Activated naive CD8-positive, alpha-beta T cell treated with anti-CD3 and anti-CD28 coated beads, Interleukin-2, amount 10 ng/mL, durations not matched to agents 7 days and 5 days (primary cell): ENCODE measurements at regions of chr17 and their contacts with region 1.

Region 1: GRCh38 chr17:40121181-40122135 is at the start of gene MSL1:
- DNase-seq: peak; percentile 91
- ATAC-seq: peak; percentile 60
- H3K4me3 Mint-ChIP-seq: peak within 1 kb of the TSS; percentile 81
- H3K27ac Mint-ChIP-seq: peak within 1 kb of the TSS; percentile 75
- H3K4me1 Mint-ChIP-seq: peaks cover 33% of the 10 kb centered on the region
- H3K27me3 Mint-ChIP-seq: no peaks in the 10 kb centered on the region
- total RNA-seq, gene MSL1: 107 to 110 TPM

Region 2: DNA sequence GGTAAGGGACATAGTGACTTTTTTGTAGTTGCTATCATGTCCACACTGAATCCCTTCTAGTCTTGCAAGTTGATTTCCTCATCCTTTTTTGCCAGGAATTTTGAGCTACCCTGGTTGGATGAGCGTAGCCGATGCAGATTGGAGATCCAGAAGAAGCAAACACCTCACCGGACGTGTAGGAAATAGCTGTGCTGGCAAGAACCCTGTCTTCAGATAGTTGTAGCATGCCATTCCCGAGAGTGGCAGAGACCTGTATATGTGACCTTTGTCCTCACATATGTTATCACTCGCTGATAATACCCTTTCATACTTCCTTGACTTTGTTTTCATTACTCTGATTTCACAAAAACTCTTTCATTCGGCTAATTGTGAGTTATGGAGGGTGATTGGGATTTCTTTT is 12.7 kb after region 1 on chr17:
- POLR2A ChIA-PET with region 1: interaction called, 48 read pairs
- DNase-seq: no peak
- ATAC-seq: no peak
- H3K4me3 Mint-ChIP-seq: no peak overlapping the region
- H3K27ac Mint-ChIP-seq: no peak overlapping the region
- H3K4me1 Mint-ChIP-seq: peaks cover 13% of the 10 kb centered on the region
- H3K27me3 Mint-ChIP-seq: no peaks in the 10 kb centered on the region

Region 3: GRCh38 chr17:40139566-40140058 is 18.2 kb after region 1 on chr17:
- POLR2A ChIA-PET with region 1: interaction called, 48 read pairs
- DNase-seq: peak; percentile 38
- ATAC-seq: peak; percentile 1
- H3K4me3 Mint-ChIP-seq: peak overlapping the region; percentile 99
- H3K27ac Mint-ChIP-seq: peak overlapping the region; percentile 97
- H3K4me1 Mint-ChIP-seq: peaks cover 28% of the 10 kb centered on the region
- H3K27me3 Mint-ChIP-seq: no peaks in the 10 kb centered on the region

Region 4: GRCh38 chr17:40159456-40159855 is 38.0 kb after region 1 on chr17:
- POLR2A ChIA-PET with region 1: no interaction called
- DNase-seq: no peak
- ATAC-seq: no peak
- H3K4me3 Mint-ChIP-seq: no peak overlapping the region
- H3K27ac Mint-ChIP-seq: no peak overlapping the region
- H3K4me1 Mint-ChIP-seq: peaks cover 5% of the 10 kb centered on the region
- H3K27me3 Mint-ChIP-seq: no peaks in the 10 kb centered on the region